BJ (cell line): ENCODE measurements at regions of chr11 and their contacts with region 1.

Region 1: DNA sequence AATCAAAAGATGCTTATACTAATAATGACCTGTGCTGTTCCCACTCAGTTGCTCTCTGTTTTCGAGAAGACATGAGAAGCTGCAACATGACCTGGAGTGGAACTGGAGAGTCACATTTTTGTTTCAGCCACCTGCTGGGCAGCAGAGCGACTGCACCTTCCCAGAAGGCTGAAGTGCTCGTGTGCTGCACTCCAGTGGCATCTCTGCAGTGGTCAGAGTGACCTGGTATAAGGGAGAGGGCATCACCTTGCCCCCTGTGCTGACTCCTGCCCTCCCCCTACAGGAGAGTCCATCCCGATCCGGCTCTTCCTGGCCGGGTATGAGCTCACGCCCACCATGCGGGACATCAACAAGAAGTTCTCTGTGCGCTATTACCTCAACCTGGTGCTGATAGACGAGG is 8.5 kb downstream of the THYN1 start:
- DNase-seq: no peak
- H3K4me3 ChIP-seq: no peak overlapping the region
- H3K27me3 ChIP-seq: no peaks in the 10 kb centered on the region
- CTCF ChIP-seq: peak; percentile 45

Region 2: DNA sequence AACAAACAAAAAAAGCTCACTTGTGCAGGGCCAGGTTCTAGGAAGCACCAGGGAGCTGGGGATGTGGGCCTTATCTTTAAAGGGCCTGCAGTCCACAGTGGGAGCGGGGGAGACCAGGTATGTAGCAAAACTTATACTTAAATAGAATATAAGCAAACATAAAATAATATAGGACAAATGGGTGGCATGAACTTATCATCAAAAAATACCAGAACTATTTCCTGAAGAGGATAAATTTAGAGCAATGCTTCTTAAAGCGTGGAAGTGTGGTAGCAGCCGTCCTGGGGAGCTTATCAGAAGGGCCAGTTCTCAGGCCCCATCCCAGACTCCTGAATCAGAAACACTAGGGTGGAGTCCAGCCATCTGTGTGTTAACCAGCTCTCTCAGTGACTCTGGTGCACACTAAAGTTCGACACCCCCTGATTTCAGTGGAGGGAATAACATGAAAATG is 10.9 kb before region 1 on chr11:
- CTCF ChIA-PET with region 1: interaction called, 11 read pairs
- POLR2A ChIA-PET with region 1: no interaction called
- DNase-seq: no peak
- H3K4me3 ChIP-seq: no peak overlapping the region
- H3K27me3 ChIP-seq: no peaks in the 10 kb centered on the region
- CTCF ChIP-seq: no peak

Region 3: GRCh38 chr11:134822897-134823296 is 578.2 kb after region 1 on chr11:
- CTCF ChIA-PET with region 1: no interaction called
- POLR2A ChIA-PET with region 1: no interaction called
- DNase-seq: no peak
- H3K4me3 ChIP-seq: no peak overlapping the region
- H3K27me3 ChIP-seq: no peaks in the 10 kb centered on the region
- CTCF ChIP-seq: no peak